ENCODE measurements at regions of chr2 and their contacts with region 1.

Region 1: DNA sequence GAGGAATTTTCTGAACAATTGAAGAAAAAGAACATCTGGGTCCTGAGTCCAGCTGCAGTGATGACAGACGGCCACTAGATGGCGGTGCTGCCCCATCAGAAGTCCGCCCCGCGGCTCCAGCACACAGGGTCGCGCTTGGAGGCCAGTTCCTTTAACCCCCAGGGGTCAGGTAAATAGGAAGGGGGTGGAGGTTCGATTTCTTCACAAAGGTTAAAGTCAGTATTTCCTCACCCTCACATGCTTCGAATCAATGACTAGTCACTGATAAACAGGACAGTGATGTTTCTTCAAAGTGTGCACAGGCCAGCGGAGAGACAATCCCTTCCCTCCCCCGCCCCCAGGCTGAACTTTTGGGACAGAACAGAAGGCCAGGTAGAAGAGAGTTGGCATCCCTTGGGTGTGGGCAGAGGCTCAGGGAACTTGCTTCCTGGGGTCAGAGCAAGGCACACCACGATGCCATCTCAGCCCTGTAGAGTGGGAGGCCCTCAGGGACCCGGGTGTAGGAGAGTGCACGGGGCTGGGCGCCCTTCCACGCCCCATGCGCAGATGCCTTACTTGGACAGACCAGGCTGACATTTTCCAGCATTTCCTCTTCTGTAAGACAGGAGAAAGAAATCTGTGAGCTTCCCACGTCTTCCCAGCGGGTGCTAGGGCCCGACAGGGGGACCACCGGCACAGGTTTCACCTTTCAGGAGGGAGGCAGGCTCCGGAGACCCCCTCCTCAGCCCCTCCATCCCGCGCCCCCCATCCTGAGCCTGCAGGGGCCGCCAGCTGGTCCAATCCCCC is 722 bp downstream of the APOB start:
- DNase-seq: peak; percentile 55
- H3K4me3 Mint-ChIP-seq: no peak overlapping the region
- H3K27ac Mint-ChIP-seq: no peak overlapping the region
- H3K4me1 Mint-ChIP-seq: peaks cover 2% of the 10 kb centered on the region
- H3K27me3 Mint-ChIP-seq: peaks cover 11% of the 10 kb centered on the region

Region 2: GRCh38 chr2:20823917-20824316 is 219.2 kb before region 1 on chr2:
- CTCF ChIA-PET with region 1: no interaction called
- POLR2A ChIA-PET with region 1: no interaction called
- DNase-seq: no peak
- H3K4me3 Mint-ChIP-seq: no peak overlapping the region
- H3K27ac Mint-ChIP-seq: no peak overlapping the region
- H3K4me1 Mint-ChIP-seq: peaks cover 20% of the 10 kb centered on the region
- H3K27me3 Mint-ChIP-seq: no peaks in the 10 kb centered on the region

Region 3: GRCh38 chr2:21072477-21073242 is 29.5 kb after region 1 on chr2:
- CTCF ChIA-PET with region 1: no interaction called
- POLR2A ChIA-PET with region 1: no interaction called
- DNase-seq: no peak
- H3K4me3 Mint-ChIP-seq: no peak overlapping the region
- H3K27ac Mint-ChIP-seq: no peak overlapping the region
- H3K4me1 Mint-ChIP-seq: no peaks in the 10 kb centered on the region
- H3K27me3 Mint-ChIP-seq: peaks cover 1% of the 10 kb centered on the region

Region 4: DNA sequence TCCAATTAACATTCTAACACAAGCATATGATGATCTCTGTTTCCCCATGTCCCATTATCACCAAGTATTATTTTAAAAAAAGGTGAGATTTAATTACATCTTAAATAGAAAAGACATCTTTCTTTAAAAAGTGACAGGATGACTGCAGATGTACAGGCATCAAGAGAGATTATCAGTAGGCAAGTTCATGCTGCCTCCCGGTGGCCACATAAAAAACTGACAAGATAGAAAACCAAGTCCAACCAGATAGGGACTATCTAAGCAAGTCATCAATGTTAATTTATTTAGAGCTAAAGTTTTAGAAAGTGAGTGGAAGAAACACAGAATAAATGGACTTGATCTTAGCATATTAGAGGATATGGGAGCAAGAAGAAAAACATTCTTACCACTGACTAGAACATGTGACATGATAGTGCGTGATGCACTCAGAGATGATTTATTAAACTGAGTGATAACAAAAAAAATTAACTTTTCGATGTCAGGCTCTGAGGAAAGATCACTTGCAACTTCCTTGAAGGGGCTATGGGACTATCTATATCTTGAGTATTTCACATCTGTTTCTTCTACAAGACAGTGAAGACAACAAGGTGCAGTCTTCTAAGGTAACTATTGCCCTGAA is 75.3 kb after region 1 on chr2:
- CTCF ChIA-PET with region 1: interaction called, 16 read pairs
- POLR2A ChIA-PET with region 1: no interaction called
- DNase-seq: no peak
- H3K4me3 Mint-ChIP-seq: no peak overlapping the region
- H3K27ac Mint-ChIP-seq: no peak overlapping the region
- H3K4me1 Mint-ChIP-seq: no peaks in the 10 kb centered on the region
- H3K27me3 Mint-ChIP-seq: peaks cover 4% of the 10 kb centered on the region

Region 5: GRCh38 chr2:21317131-21317530 is 274.0 kb after region 1 on chr2:
- CTCF ChIA-PET with region 1: interaction called, 31 read pairs
- POLR2A ChIA-PET with region 1: no interaction called
- DNase-seq: peak; percentile 38
- H3K4me3 Mint-ChIP-seq: no peak overlapping the region
- H3K27ac Mint-ChIP-seq: no peak overlapping the region
- H3K4me1 Mint-ChIP-seq: no peaks in the 10 kb centered on the region
- H3K27me3 Mint-ChIP-seq: no peaks in the 10 kb centered on the region

Measured in activated CD4-positive, alpha-beta memory T cell treated with anti-CD3 and anti-CD28 coated beads, Interleukin-2, amount 10 ng/mL, durations not matched to agents 7 days and 5 days (primary cell).